Head of caudate nucleus (tissue), 42 donors: ENCODE measurements at regions of chr11 and their contacts with region 1.

Region 1: DNA sequence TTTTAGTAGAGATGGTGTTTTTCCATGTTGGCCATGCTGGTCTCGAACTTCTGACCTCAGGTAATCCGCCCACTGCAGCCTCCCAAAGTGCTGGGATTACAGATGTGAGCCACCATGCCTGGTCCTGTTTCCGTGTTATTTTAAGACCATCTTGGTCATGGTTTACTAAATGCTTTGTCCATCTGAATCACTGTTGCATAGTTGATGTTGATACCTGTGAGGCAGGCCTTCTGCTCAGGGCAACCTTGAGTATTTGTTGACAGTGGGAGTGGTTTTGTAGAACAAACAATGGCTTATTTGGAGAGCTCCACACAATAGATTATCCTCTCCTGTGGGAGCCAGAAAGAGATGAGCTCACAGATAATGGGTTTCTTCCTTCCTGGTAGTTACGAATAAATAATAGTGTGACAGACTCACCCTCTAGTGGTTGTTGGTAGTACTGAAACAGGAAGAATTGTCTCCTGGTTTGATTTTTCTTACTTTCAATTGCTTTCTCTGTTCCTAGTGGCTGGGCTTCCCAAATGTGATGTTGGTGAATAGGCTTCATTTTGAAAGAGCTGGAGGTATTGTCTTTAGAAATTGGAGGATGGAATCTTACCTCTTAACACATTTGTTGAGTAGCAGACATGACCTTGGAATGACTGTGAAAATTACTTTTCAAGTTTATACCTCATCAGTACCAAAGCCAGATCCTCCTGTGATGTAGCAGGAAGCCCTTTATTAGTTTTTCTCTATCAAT is 39.0 kb downstream of the CTNND1 start:
- DNase-seq: peak in 10 of 42 donors; percentile 10 to 71 (median 30)

Region 2: GRCh38 chr11:57667736-57668435 is 132.7 kb before region 1 on chr11 and contains the start of gene ZDHHC5:
- intact Hi-C with region 1: loop called (anchors 5 kb)
- DNase-seq: peak; percentile 98 to 100 (median 99)

Region 3: GRCh38 chr11:57698843-57699365 is 101.7 kb before region 1 on chr11:
- intact Hi-C with region 1: no loop called
- DNase-seq: no peak

Region 4: GRCh38 chr11:57712256-57713150 is 88.1 kb before region 1 on chr11 and contains the start of gene TMX2:
- intact Hi-C with region 1: loop called (anchors 5 kb)
- DNase-seq: peak; percentile 88 to 98 (median 95)

Region 5: DNA sequence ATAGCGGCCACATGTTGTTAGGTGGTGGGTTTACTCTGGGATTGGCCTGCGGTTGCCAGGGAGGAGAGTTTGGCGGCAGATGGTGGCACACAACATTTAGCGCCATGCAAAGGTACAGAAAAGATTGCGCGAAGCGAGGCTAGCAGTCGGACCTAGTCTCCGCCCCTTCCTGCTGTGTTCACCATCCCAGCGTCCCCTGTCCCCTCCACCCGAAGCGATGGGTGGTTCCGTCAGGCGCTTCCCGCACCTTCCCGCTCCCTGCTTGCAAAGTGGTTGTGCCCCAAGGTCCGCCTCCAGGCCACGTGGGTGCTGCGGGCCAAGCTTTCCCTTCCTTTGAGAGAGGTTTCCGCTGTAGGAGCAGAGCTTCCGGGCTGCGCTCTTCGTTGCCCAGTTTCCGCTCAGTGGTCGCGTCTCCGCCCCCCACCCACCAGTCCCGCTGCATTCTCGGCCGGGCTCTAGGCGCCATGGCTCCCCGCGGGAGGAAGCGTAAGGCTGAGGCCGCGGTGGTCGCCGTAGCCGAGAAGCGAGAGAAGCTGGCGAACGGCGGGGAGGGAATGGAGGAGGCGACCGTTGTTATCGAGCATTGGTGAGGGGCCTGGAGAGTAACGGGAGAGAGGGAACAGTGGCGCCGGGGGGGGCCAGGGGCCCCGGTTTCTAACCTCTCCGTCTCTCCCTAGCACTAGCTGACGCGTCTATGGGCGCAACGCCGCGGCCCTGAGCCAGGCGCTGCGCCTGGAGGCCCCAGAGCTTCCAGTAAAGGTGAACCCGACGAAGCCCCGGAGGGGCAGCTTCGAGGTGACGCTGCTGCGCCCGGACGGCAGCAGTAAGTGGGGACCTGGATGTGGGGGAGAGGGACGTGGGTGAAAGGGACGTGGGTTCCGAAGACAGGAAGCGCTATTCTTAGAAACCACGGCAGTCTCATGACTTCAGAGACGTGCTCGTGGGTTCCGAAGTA is 59.2 kb before region 1 on chr11 and contains the start of gene SELENOH:
- intact Hi-C with region 1: loop called (anchors 5 kb)
- DNase-seq: peak; percentile 91 to 99 (median 97)